Cardiac septum (tissue), 1 donor: ENCODE measurements at regions of chr12 and their contacts with region 1.

Region 1: GRCh38 chr12:93766796-93767523 is 89.8 kb downstream of the CRADD start:
- DNase-seq: no peak

Region 2: DNA sequence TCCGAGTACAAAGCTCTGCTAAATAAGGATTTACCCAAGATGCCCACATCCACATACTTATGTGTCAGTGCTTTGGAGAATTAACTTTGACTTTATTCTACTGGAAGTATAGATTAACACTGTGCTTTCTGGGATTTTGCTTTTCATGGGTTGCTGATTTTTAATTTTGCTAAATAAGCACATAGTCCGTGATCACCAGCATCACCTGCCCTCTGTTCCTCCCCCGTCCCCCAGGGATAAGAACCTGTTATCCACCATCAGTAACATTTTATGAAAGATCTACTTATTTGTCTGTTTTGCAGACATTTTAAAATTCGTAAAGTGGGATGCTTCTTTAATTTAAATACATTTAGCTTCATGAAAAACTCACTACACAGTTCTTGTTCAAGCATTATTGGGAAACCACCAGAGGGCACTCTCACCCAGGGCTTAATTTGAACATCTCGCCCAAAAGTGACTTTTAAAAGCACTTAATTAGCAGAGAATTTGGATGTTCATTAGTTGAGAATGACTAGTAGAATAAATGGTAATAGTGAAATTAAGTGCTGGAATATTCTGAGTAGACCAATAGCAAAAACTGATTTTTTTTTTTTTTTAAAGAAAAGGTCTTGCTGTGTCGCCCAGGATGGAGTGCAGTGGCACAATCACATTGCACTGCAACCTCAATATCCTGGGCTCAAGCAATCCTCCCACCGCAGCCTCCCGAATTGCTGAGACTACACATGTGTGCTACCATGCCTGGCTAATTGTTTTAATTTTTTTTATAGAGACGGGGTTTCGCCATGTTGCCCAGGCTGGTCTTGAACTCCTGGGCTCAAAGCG is 263.9 kb before region 1 on chr12:
- intact Hi-C with region 1: loop called (anchors 5 kb)
- DNase-seq: no peak

Region 3: GRCh38 chr12:93689076-93689834 is 77.7 kb before region 1 on chr12:
- intact Hi-C with region 1: no loop called
- DNase-seq: no peak

Region 4: DNA sequence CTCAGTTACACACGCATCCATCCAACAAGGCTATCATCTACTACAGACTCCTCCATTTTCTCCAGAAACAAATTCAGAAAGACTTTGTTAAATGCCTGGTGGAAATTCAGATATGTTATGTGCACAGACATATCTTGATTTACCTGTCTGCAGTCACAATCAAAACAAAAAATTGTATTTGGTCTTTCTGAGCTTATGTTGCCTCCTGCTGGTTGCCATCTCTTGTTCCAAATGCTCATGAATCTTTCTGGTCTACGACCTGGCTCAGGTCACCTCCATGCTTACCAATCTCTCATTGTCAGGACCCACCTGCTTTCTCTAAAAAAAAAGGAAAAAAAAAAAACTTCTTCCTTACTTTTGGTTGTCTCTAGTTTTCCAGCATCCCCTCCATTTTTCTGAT is 212.2 kb after region 1 on chr12:
- intact Hi-C with region 1: loop called (anchors 2 kb)
- DNase-seq: no peak

Region 5: GRCh38 chr12:94074980-94075928 is 308.3 kb after region 1 on chr12:
- intact Hi-C with region 1: loop called (anchors 5 kb)
- DNase-seq: no peak